Tibial artery (tissue), 4 donors: ENCODE measurements at regions of chr2 and their contacts with region 1.

Region 1: GRCh38 chr2:241217320-241218031 is 29.0 kb downstream of the ANO7 start:
- DNase-seq: peak; percentile 67 to 79
- H3K4me3 ChIP-seq: peak overlapping the region; percentile 46 to 56
- H3K27ac ChIP-seq: peak overlapping the region; percentile 65 to 80
- H3K4me1 ChIP-seq: peaks cover 0 to 17% (median 13%) of the 10 kb centered on the region in 4 donors
- H3K27me3 ChIP-seq: no peaks in the 10 kb centered on the region
- CTCF ChIP-seq: peak in 1 of 2 experiments; percentile 13

Region 2: DNA sequence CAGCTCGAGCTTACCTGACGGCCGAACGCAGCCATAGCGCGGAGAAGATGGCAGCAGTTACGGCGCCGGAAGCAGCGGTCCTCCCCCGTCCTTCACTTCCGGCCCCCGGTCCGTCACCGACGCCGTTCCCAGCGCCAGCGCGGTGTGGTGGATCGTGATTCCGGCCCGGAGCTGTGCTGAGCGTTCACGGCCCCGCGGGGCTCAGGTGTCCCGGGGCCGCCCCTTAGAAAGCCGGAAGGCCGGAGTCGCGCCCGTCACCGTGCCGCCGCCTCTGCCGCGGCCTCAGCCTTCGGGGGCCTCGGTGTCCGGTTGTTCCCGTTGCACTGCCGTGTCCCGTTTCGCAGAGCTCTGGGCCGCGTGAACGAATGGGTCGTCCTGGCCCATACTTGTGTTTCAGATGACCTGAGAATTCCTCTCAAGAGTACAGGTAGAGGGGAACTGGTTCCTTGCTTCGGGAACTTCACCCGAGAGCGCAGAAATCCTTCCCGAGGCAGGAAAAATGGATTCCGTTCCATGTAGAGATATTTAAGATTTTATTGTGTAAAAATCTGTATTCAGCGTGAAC is 115.2 kb before region 1 on chr2 and contains the start of gene MTERF4:
- intact Hi-C with region 1: loop called (anchors 10 kb)
- DNase-seq: peak; percentile 88 to 92
- H3K4me3 ChIP-seq: peak within 1 kb of the TSS; percentile 65 to 87
- H3K27ac ChIP-seq: peak within 1 kb of the TSS; percentile 73 to 84
- H3K4me1 ChIP-seq: peaks cover 0 to 23% (median 18%) of the 10 kb centered on the region in 4 donors
- H3K27me3 ChIP-seq: no peaks in the 10 kb centered on the region
- CTCF ChIP-seq: no peak